ENCODE measurements at regions of chr2 and their contacts with region 1.

Region 1: GRCh38 chr2:168210895-168211570 is 36.4 kb downstream of the STK39 start:
- DNase-seq: peak; percentile 94
- ATAC-seq: peak; percentile 82
- H3K4me3 ChIP-seq: peak overlapping the region in 1 of 2 experiments; percentile 29; a peak in 2 of 4 replicates
- H3K27ac ChIP-seq: peak overlapping the region; percentile 99
- H3K4me1 ChIP-seq: peaks cover 89 to 100% of the 10 kb centered on the region in 2 experiments
- H3K27me3 ChIP-seq: no peaks in the 10 kb centered on the region
- CTCF ChIP-seq: no peak
- POLR2A ChIP-seq: no peak
- RAD21 ChIP-seq: peak; percentile 50

Region 2: GRCh38 chr2:167992278-167992677 is 218.8 kb before region 1 on chr2:
- CTCF ChIA-PET with region 1: no interaction called
- POLR2A ChIA-PET with region 1: no interaction called
- RAD21 ChIA-PET with region 1: no interaction called
- intact Hi-C with region 1: no loop called
- DNase-seq: no peak
- ATAC-seq: no peak
- H3K4me3 ChIP-seq: no peak overlapping the region
- H3K27ac ChIP-seq: no peak overlapping the region
- H3K4me1 ChIP-seq: no peaks in the 10 kb centered on the region
- H3K27me3 ChIP-seq: no peaks in the 10 kb centered on the region
- CTCF ChIP-seq: no peak
- POLR2A ChIP-seq: no peak
- RAD21 ChIP-seq: no peak

Region 3: GRCh38 chr2:168166902-168167510 is 44.0 kb before region 1 on chr2:
- CTCF ChIA-PET with region 1: no interaction called
- POLR2A ChIA-PET with region 1: no interaction called
- RAD21 ChIA-PET with region 1: no interaction called
- intact Hi-C with region 1: loop called (anchors 2 kb)
- DNase-seq: peak; percentile 83
- ATAC-seq: peak; percentile 86
- H3K4me3 ChIP-seq: peak overlapping the region in 1 of 2 experiments; percentile 19; a peak in 2 of 4 replicates
- H3K27ac ChIP-seq: peak overlapping the region; percentile 89
- H3K4me1 ChIP-seq: peaks cover 54 to 90% of the 10 kb centered on the region in 2 experiments
- H3K27me3 ChIP-seq: no peaks in the 10 kb centered on the region
- CTCF ChIP-seq: no peak
- POLR2A ChIP-seq: no peak
- RAD21 ChIP-seq: peak; percentile 18; the same call in 1 of the 2 replicates

Region 4: DNA sequence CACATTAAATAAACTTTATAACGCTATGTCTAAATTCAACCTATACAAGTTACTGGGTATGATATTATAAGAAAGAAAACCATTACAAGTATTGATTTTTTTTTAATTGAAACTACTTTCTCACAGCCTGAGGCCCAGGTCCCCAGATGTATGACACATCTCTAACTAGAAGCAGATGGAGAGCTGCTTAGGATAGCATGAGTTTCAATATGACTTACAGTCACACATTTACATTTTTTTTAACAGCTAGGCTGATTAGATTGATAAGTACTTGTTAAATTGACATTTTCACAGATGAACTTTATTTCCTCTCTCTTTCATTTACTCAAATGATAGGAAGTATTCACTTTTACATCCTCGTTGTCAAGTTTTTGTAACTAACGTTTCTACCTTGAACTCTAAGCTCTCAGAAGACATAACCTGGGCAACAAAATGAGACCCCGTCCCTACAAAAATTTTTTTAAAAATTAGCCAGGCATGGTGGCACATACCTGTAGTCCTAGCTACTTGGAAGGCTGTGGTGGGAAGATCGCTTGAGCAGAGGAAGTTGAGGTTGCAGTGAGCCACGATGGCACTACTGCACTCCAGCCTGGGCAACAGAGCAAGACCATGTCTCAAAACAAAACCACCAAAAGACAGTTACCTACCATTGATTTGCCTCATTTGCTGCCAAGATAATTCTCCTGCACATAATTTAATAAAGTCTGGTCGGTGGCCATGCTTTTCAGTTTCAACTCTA is 16.1 kb before region 1 on chr2:
- CTCF ChIA-PET with region 1: no interaction called
- POLR2A ChIA-PET with region 1: interaction called, 17 read pairs
- RAD21 ChIA-PET with region 1: no interaction called
- intact Hi-C with region 1: loop called (anchors 1 kb)
- DNase-seq: no peak
- ATAC-seq: no peak
- H3K4me3 ChIP-seq: no peak overlapping the region
- H3K27ac ChIP-seq: peak overlapping the region; percentile 99
- H3K4me1 ChIP-seq: peaks cover 94 to 100% of the 10 kb centered on the region in 2 experiments
- H3K27me3 ChIP-seq: no peaks in the 10 kb centered on the region
- CTCF ChIP-seq: no peak
- POLR2A ChIP-seq: no peak
- RAD21 ChIP-seq: no peak

Region 5: DNA sequence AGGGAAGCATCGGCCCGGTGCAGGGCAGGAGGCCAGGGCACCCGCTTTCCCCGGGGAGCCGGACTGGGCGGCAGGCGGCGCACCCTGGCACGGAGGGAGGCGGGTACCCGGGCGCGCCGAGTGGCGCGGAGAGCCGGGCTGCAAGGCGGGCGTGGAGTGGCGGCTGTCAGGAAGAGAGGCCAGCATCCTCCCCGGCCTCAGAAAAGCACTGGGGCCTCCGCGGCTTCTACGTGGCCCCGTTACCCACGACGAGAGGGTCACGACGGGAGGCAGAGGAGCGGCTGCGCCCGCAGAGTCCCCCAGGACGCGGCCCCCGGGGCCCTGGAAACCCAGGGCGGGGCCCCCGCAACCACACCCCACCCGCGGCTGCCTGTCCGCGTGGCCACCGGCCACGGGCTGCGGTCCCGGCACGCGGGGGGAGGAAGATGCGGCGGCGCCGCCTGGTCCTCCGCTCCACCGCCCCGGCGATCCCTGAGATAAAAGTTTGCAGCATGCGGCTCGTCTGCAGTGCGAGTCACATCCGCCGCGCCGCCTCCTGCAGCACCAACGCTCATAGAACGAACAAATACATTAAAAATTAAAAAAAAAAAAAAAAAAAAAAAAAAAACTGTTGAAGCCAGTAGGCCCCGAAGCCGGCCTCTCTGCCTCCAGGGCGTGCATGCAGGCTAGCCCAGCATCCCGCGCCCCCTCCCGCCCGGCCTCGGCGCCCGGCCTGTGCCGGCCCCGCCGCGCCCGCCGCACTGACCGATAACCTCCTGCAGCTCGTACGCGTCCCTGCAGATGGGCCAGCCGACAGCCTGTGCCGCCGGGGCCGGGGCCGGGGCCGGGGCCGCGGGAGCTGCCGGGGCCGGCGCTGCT is 35.7 kb after region 1 on chr2:
- CTCF ChIA-PET with region 1: no interaction called
- POLR2A ChIA-PET with region 1: no interaction called
- RAD21 ChIA-PET with region 1: no interaction called
- intact Hi-C with region 1: loop called (anchors 2 kb)
- DNase-seq: no peak
- ATAC-seq: peak; percentile 54
- H3K4me3 ChIP-seq: peak overlapping the region; percentile 56 to 75
- H3K27ac ChIP-seq: peak overlapping the region; percentile 95
- H3K4me1 ChIP-seq: peaks cover 39 to 57% of the 10 kb centered on the region in 2 experiments
- H3K27me3 ChIP-seq: no peaks in the 10 kb centered on the region
- CTCF ChIP-seq: peak in 2 of 3 experiments; percentile 19 to 44; a peak in 4 of 6 replicates
- POLR2A ChIP-seq: no peak
- RAD21 ChIP-seq: no peak

Measured in HCT116 (cell line).